ENCODE measurements at regions of chr1 and their contacts with region 1.

Region 1: GRCh38 chr1:89987170-89987819 is 7.6 kb upstream of the ZNF326 start:
- DNase-seq: peak; percentile 87
- H3K4me3 ChIP-seq: no peak overlapping the region
- H3K27ac ChIP-seq: no peak overlapping the region
- H3K4me1 ChIP-seq: peaks cover 40% of the 10 kb centered on the region
- H3K27me3 ChIP-seq: no peaks in the 10 kb centered on the region
- CTCF ChIP-seq: peak; percentile 89

Region 2: DNA sequence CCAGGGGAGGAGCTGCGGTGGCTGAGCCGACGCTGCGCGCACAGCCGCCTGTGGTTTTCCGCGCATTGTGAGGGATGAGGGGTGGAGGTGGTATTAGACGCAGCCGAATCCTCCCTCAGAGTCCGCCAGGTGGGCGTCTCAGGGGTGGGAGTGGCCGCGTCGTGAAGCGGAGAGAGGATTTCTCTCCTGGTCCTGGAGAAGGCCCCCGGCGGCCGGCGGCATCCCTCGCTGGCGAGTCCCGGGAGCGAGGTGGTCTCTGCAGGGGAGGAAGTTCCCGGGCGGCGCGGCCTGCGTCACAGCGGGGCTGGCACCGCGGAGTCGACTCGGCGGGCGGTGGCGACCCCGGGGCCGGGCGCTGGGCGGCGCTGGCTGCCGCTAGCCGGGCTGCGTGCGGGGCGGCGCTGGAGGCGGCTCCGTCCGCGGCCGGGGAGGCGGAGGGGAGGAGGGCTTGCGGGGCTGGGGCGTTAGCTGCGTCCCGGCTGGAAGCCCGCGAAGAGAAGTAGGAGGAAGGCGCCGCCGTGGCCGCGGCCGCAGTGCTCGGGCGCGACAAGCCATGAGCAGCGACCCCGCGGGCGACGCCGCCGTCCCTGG is 354.5 kb before region 1 on chr1 and contains the start of gene LRRC8C:
- CTCF ChIA-PET with region 1: no interaction called
- POLR2A ChIA-PET with region 1: no interaction called
- intact Hi-C with region 1: loop called (anchors 10 kb)
- DNase-seq: peak; percentile 89
- H3K4me3 ChIP-seq: peak within 1 kb of the TSS; percentile 94
- H3K27ac ChIP-seq: peak within 1 kb of the TSS; percentile 79
- H3K4me1 ChIP-seq: peaks cover 8% of the 10 kb centered on the region
- H3K27me3 ChIP-seq: no peaks in the 10 kb centered on the region
- CTCF ChIP-seq: no peak; the same call in 1 of the 2 replicates
- total RNA-seq, gene LRRC8C: 5.6 and 6.9 TPM in 2 replicates

Region 3: DNA sequence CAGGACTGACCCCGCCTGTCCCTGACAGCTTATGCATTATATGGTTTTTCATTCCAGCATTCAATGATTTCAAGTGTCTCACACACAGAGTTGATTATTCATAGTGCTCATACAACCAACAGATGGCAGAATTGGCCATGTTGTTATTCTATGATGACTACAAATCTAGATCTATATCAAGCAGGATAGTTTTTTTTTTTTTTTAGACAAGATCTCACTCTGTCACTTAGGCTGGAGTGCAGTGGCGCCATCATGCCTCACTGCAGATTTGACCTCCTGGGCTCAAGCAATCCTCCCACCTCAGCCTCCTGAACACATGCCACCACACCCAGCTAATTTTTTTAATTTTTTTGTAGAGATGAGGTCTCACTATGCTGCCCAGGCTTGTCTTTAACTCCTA is 206.6 kb before region 1 on chr1:
- CTCF ChIA-PET with region 1: no interaction called
- POLR2A ChIA-PET with region 1: no interaction called
- intact Hi-C with region 1: loop called (anchors 1 kb)
- DNase-seq: peak; percentile 75
- H3K4me3 ChIP-seq: no peak overlapping the region
- H3K27ac ChIP-seq: no peak overlapping the region
- H3K4me1 ChIP-seq: peaks cover 3% of the 10 kb centered on the region
- H3K27me3 ChIP-seq: no peaks in the 10 kb centered on the region
- CTCF ChIP-seq: peak; percentile 67

Region 4: DNA sequence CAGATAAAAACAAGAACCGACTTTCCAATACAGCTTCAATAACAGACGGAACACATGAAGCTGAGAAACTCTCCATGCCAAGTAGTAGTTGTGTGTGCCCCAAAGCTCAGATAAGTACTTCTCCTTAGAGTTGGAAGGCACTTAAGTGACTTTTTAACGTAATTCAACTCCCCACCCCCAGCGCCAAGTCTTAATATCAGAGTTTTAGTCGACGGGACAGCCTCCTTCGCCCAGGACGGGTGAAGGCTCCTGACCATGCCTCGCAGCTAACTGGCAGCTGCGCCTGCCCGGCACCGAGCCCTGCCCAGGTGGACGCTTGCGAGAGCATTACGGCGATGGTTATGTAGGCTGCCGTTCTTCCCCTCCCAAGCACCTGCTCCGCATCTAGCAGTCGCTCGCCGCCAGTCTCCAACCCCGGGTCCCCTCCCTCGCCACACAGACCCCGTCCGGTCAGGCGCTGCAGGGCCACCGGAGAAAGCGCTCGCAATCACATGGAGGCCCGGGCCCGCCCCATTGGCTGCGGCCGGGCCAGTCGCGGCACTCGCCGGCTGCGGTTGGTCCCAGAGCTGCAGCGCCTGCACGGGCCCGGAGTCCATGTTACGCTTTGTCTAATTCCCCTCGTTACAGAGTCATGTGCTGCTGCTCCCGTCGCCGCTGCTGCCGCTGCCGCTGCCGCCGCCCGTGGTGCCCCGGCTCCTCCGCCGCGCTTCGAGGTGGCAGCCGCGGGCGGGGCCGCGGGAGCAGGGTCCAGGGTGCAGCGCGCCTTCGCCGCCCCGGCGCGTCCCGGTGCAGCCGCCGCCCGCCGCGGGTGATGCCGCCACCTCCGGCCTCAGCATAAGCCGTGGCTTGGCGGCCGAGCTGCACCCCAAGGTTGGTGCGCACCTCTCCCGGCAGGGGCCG is 166.6 kb before region 1 on chr1 and contains the start of gene LRRC8D:
- CTCF ChIA-PET with region 1: interaction called, 6 read pairs
- POLR2A ChIA-PET with region 1: no interaction called
- intact Hi-C with region 1: loop called (anchors 5 kb)
- DNase-seq: peak; percentile 90
- H3K4me3 ChIP-seq: peak within 1 kb of the TSS; percentile 86
- H3K27ac ChIP-seq: peak within 1 kb of the TSS; percentile 89
- H3K4me1 ChIP-seq: peaks cover 39% of the 10 kb centered on the region
- H3K27me3 ChIP-seq: no peaks in the 10 kb centered on the region
- CTCF ChIP-seq: no peak
- total RNA-seq, gene LRRC8D: 59.4 and 67.5 TPM in 2 replicates

Region 5: DNA sequence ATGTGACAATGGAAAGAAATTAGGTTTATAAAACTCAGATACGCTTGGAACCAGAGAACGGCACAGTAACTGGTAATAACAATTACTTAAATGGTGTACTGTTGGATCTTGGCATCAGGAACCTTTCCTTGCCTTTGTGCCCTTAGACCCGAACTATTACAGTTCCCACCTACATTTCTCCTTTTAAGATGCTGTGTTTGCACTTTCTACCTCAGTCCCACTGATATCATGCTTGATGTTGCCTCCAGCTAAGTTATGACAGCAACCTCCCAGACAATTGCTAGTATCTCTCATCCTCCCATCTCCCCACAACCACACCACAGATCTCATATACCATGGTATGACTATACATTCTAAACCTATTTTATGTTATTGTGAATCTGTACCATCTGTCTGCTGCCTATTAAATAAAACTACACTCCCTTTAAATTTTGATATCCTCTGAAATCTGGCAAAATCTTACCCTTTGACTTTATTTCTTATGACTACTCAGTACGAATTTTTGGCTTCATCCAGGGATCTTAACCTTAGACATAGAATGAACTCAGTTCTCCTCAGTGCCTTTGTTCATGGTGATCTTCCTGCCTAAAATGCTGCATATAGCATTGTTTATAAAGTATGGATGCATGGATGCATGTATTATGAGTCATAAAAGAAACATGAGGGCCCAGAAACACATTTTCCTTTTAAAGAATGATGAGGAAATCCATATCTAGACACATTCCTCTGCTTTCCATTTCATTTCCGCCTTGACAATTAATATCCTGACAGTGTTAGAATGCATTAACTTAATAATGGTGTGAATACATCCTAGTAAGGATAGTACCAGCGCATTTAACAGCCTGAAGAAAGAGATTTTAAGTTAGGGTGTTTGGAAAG is 102.3 kb before region 1 on chr1:
- CTCF ChIA-PET with region 1: no interaction called
- POLR2A ChIA-PET with region 1: no interaction called
- intact Hi-C with region 1: no loop called
- DNase-seq: peak; percentile 62
- H3K4me3 ChIP-seq: no peak overlapping the region
- H3K27ac ChIP-seq: peak overlapping the region; percentile 70
- H3K4me1 ChIP-seq: peaks cover 69% of the 10 kb centered on the region
- H3K27me3 ChIP-seq: no peaks in the 10 kb centered on the region
- CTCF ChIP-seq: no peak

Region 6: GRCh38 chr1:89908672-89909436 is 78.4 kb before region 1 on chr1:
- CTCF ChIA-PET with region 1: no interaction called
- POLR2A ChIA-PET with region 1: no interaction called
- intact Hi-C with region 1: loop called (anchors 2 kb)
- DNase-seq: peak; percentile 97
- H3K4me3 ChIP-seq: peak overlapping the region; percentile 0
- H3K27ac ChIP-seq: peak overlapping the region; percentile 92
- H3K4me1 ChIP-seq: peaks cover 87% of the 10 kb centered on the region
- H3K27me3 ChIP-seq: no peaks in the 10 kb centered on the region
- CTCF ChIP-seq: no peak

Region 7: DNA sequence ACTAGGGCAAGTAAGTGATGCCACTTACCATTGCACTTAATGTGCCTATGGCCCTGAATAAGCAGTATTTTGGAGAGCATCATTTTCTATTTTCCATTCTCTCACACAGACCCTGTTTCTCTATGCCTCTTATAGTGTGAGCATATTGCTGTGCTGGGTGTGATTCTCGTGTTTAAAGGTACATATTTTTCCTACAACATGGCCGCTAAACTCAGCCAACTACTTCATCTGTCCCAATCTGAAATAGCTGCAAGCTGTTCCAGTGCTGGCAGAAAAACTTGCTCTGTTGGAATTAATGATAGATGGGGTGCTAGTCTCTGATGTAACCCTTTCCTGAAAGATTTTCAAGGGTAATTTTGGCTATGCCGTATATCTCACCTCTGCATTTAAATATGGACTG is 105.1 kb after region 1 on chr1:
- CTCF ChIA-PET with region 1: no interaction called
- POLR2A ChIA-PET with region 1: no interaction called
- intact Hi-C with region 1: no loop called
- DNase-seq: no peak
- H3K4me3 ChIP-seq: no peak overlapping the region
- H3K27ac ChIP-seq: no peak overlapping the region
- H3K4me1 ChIP-seq: no peaks in the 10 kb centered on the region
- H3K27me3 ChIP-seq: no peaks in the 10 kb centered on the region
- CTCF ChIP-seq: no peak